ENCODE measurements at regions of chr15 and their contacts with region 1.

Region 1: DNA sequence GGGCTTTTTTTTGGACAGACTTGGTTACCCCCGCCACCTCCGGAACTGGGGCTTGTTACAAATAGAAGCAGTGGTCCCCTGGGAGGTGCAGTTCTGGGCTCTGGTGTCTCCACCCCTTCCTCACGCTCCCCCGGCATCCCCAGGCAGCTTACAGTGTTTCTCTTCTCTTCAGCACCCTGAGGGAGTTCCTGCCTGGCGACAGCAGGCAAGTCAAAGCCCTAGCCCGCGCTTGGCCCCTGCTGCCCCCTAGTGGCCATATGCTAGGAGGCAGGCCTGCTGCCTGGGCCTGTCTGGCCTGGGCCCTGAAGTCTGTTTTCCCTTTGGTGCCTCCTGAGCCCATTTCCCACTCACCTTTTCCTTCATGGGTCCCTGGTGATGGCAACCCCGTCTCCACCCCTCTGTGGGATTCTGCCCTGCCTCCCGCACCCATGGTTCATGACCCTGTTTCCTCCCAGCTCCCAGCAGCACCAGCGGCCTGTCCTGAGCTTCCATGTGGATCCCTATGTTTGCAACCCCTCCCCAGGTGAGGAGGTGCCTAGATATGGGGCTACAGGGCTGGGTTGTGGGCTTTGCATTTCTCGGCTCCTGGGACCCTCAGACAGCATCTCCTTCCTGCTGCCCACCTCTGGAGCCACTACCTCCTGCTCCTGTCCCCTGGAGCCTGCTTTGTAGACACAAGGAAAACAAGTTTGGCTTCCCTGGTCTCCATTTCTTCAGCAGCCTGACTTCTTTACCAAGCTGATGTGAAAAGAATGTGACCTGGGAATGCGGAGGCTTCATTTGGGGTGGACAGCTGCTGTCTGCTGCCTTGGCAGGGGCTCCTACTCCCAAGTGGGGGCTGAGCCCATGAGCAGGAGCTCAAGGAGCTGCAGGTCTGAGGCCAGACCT is 2.2 kb downstream of the SNX22 start:
- DNase-seq: peak; percentile 95
- ATAC-seq: peak; percentile 89
- H3K4me3 Mint-ChIP-seq: peak overlapping the region; percentile 36
- H3K27ac Mint-ChIP-seq: peak overlapping the region; percentile 66
- H3K4me1 Mint-ChIP-seq: peaks cover 26% of the 10 kb centered on the region
- H3K27me3 Mint-ChIP-seq: peaks cover 15% of the 10 kb centered on the region
- CTCF ChIP-seq: peak; percentile 91

Region 2: DNA sequence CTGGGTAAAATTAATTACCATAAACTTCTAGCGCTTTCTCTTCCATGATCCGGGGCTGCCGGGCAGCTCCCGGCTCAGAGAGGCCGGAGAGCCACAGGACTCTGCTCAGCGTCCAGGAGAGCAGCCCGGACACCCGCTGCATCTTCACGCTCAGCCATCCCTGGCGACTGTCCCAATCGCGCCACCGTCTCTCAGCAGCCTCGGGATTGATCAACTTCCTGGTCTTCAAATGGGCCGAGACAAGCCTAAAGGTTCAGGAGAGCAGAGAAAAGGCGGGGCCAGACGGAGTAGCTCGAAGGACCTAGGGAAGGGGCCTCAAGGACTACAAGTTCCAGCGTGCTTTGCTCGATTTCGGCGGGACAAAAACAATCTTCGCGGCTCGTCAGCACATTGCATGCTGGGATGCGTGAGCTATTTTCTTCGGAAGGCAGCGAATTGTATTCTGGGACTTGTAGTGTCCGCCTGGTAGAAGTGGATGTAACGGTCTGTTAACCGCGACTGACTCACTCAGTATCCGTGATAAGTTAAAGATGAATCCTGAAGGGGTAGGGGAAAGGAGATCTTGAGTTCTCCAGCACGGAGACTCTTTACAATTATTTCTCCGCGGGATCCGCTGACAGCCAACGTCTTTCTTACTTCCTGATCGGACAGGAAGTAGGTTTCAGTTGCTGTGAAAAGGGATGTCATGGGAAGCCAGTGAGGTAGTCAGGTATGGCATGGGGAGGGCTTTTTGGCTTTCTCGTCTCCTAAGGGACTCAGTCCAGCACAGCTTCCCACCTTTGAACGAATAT is 59.9 kb before region 1 on chr15 and contains the start of gene CIAO2A:
- CTCF ChIA-PET with region 1: interaction called, 22 read pairs
- POLR2A ChIA-PET with region 1: interaction called, 16 read pairs
- intact Hi-C with region 1: no loop called
- DNase-seq: peak; percentile 98
- ATAC-seq: peak; percentile 85
- H3K4me3 Mint-ChIP-seq: peak within 1 kb of the TSS; percentile 91
- H3K27ac Mint-ChIP-seq: peak within 1 kb of the TSS; percentile 97
- H3K4me1 Mint-ChIP-seq: peaks cover 49% of the 10 kb centered on the region
- H3K27me3 Mint-ChIP-seq: no peaks in the 10 kb centered on the region
- CTCF ChIP-seq: no peak
- total RNA-seq, gene CIAO2A: 88.3 to 99.4 TPM

Region 3: GRCh38 chr15:64131547-64131946 is 22.2 kb before region 1 on chr15:
- CTCF ChIA-PET with region 1: interaction called, 16 read pairs
- POLR2A ChIA-PET with region 1: interaction called, 3 read pairs
- intact Hi-C with region 1: no loop called
- DNase-seq: no peak
- ATAC-seq: no peak
- H3K4me3 Mint-ChIP-seq: no peak overlapping the region
- H3K27ac Mint-ChIP-seq: no peak overlapping the region
- H3K4me1 Mint-ChIP-seq: no peaks in the 10 kb centered on the region
- H3K27me3 Mint-ChIP-seq: no peaks in the 10 kb centered on the region
- CTCF ChIP-seq: no peak

Region 4: DNA sequence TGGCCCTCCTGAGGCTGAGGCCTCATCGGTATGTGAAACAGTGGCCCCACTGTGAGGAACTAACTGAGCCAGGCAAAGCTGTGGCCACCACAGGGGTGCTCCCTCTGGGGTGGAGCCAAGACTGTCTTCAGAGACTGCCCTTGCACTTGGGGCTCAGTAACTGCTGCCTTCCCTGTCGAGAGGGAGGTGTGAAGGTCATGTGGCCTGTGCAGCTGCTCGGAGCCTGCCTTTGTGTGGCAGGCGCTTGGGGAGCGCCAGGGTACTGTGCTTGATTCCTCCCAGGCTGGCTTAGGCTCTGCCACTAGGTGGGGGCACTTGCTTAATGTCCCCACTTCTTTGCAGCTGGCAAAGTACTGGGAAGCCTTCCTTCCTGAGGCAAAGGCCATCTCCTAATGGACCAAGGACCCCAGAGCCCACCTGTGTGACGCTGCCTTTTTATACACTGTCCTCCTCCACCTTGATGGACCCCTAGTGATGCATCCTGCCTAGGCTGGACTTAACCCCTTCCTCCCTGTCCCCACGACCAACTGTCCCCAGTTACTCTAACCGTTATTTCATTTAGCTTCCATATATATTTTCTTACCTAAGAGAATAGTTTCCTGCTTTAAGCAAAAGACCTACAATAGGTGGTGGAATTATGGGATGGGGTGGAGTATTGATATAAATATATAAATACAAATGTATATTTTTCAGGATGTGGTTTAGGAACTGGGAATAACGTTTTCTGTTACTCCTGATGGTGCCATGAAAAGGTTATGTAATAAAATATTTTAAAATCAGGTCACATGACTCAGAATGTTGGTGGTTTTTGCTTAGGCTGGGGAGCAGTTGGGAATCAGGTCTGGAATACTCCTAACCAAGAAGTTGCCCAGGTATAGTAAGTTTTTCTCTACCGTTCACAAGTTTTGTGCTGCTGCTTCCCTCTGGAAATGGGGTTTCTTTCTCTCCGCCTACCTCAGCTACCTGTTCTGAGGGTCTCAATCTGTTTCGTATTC is 16.2 kb before region 1 on chr15:
- CTCF ChIA-PET with region 1: interaction called, 34 read pairs
- POLR2A ChIA-PET with region 1: interaction called, 3 read pairs
- intact Hi-C with region 1: no loop called
- DNase-seq: no peak
- ATAC-seq: no peak
- H3K4me3 Mint-ChIP-seq: no peak overlapping the region
- H3K27ac Mint-ChIP-seq: no peak overlapping the region
- H3K4me1 Mint-ChIP-seq: peaks cover 3% of the 10 kb centered on the region
- H3K27me3 Mint-ChIP-seq: no peaks in the 10 kb centered on the region
- CTCF ChIP-seq: no peak